Cardiac septum (tissue), 1 donor: ENCODE measurements at regions of chr3 and their contacts with region 1.

Region 1: DNA sequence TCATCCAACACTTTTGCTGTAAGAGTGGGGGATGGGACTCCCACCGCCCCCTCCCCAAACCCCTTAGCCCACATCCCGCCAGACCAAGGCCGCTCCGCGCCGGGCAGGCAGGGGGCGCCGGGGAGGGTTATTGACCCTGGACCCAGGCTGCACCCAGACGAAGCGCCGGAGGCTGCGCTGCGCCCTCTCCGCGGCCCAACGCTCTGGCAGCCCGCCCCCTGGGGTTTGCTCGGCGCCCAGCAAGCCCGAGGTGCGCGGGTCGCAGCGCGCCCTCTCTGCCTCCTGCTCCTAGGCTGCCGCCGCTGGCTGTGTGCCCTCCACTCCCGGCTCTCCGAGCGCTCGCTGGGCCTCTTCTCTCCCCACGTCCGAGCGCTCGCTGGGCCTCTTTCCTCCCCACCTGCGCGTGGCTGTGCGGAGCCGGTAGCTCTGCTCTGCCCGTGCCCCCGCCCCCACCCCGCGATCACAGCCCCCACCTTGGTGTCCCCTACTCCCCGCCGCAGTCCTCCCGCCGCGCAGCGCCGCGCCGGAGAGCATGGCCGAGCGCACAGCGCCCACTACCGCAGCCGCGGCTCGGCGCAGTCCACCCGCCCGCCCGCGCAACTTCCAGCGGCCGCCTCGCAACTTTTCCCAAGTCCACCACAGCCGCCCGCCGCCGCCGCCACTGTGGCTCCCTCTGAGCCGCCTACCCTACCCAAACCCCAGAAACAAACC is 1.2 kb downstream of the MECOM start:
- DNase-seq: peak; percentile 81

Region 2: GRCh38 chr3:169227911-169228310 is 434.4 kb before region 1 on chr3:
- intact Hi-C with region 1: loop called (anchors 5 kb)
- DNase-seq: no peak

Region 3: DNA sequence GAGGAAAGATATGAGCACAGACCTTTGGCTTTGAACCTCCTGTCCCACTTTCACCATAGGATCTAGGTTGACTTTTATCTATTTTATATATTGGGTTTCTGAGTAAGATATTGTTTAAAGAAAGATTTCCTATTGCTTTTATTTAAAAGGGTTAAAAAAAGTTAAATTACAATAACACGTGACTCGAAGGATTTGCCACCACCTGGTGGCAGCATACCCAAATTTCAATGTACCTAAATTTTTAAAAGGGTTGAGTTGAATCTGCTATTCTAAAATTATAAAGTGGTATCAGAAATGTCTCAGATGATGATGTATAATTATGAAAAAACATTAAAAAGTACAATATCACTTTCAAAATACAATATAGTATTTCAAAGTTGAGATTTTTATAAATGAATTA is 367.2 kb before region 1 on chr3:
- intact Hi-C with region 1: loop called (anchors 5 kb)
- DNase-seq: no peak

Region 4: GRCh38 chr3:169387751-169388696 is 274.3 kb before region 1 on chr3:
- intact Hi-C with region 1: loop called (anchors 2 kb)
- DNase-seq: peak; percentile 81

Region 5: GRCh38 chr3:169454823-169455222 is 207.5 kb before region 1 on chr3:
- intact Hi-C with region 1: loop called (anchors 2 kb)
- DNase-seq: no peak